ENCODE measurements at regions of chr2 and their contacts with region 1.

Region 1: DNA sequence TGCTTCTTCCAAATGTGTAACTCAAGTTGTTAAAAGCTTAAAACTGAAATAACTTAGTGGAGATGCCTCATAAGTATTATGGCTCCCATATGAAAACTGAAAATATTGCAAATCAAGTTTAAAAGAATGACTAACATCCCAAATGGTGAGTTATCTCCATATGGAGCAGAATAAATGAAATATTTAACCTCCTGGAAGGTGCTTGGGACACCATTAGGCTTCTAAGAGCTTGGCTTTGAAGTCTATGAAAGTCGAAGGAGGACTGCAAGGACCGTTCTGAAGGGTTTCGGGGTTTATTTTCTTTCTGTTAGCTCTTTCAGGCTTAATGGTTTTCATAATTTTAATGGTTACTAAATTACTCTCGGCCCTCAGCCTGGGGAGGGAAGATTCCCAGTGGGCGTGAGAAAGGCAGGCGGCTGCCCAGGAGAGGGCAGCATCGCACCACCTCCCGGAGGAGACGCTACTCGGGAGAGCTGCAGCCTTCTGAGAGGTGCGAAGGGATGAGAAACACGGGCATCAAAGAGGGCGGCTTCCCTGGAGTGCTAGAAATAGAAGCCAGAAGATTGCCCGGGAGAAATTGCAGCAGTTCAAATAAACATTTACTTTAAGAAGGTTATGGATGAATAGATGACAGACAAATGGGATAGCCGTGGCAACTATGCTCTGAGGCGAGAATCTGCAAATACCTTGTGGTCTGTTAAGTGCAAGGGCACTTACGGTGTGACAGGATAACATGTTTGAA is 43.1 kb downstream of the MAP3K19 start:
- DNase-seq: peak; percentile 57
- H3K4me3 Mint-ChIP-seq: no peak overlapping the region
- H3K27ac Mint-ChIP-seq: no peak overlapping the region
- H3K4me1 Mint-ChIP-seq: peaks cover 4% of the 10 kb centered on the region
- H3K27me3 Mint-ChIP-seq: peaks cover 28% of the 10 kb centered on the region

Region 2: GRCh38 chr2:134375935-134376334 is 628.2 kb before region 1 on chr2:
- intact Hi-C with region 1: no loop called
- DNase-seq: no peak
- H3K4me3 Mint-ChIP-seq: no peak overlapping the region
- H3K27ac Mint-ChIP-seq: no peak overlapping the region
- H3K4me1 Mint-ChIP-seq: no peaks in the 10 kb centered on the region
- H3K27me3 Mint-ChIP-seq: no peaks in the 10 kb centered on the region

Region 3: GRCh38 chr2:134973241-134974138 is 30.7 kb before region 1 on chr2:
- intact Hi-C with region 1: no loop called
- DNase-seq: no peak
- H3K4me3 Mint-ChIP-seq: no peak overlapping the region
- H3K27ac Mint-ChIP-seq: peak overlapping the region; percentile 65
- H3K4me1 Mint-ChIP-seq: peaks cover 11% of the 10 kb centered on the region
- H3K27me3 Mint-ChIP-seq: peaks cover 1% of the 10 kb centered on the region

Region 4: DNA sequence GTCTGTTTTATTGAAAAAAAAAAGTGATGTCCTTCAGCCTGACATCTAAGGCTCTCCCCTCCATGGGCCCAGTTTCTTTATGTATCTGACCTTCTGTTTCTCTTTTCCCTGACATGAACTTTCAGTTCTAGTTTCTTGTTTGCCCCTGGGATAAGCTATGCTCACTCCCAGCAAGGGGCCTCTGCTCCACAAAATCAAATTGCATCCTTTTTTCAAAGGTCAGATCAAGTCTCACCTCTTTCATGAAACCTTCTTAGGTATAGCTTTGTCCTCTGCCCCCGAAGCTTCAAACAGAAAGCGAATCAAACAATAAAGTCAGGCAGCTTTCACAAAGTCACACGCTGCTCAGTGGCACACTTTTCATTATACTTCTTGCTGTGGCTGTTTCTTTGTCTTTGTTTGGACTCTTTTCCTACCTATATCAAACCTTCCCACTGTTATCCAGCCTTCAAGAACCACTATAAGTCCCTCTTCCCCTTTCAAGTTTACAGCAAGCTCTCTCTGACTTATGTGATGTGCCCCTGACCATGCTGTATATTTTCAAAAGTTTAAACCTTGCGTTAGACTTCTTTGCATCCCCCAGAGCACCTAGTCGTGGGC is 19.8 kb after region 1 on chr2:
- intact Hi-C with region 1: no loop called
- DNase-seq: no peak
- H3K4me3 Mint-ChIP-seq: no peak overlapping the region
- H3K27ac Mint-ChIP-seq: no peak overlapping the region
- H3K4me1 Mint-ChIP-seq: peaks cover 19% of the 10 kb centered on the region
- H3K27me3 Mint-ChIP-seq: peaks cover 2% of the 10 kb centered on the region

Region 5: DNA sequence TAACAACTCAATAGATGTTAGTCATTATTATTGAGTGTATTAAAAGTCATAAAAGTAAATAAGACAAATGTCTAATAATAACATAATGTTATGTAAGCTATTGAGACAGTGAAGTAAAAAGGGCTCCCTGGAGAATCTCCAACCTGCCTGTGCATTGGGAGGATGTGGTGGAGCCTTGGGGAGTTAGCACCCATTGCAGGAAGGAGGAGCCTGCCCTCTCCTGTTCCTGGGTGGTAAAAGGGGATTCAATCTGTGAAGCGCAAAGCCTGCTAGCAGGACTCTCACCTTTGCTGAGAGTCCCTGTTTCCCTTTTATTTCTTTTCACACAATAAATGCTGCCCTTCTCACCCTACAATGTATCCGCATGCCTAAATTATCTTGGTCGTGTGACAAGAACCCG is 254.0 kb after region 1 on chr2:
- intact Hi-C with region 1: loop called (anchors 10 kb)
- DNase-seq: no peak
- H3K4me3 Mint-ChIP-seq: no peak overlapping the region
- H3K27ac Mint-ChIP-seq: no peak overlapping the region
- H3K4me1 Mint-ChIP-seq: no peaks in the 10 kb centered on the region
- H3K27me3 Mint-ChIP-seq: no peaks in the 10 kb centered on the region

Region 6: DNA sequence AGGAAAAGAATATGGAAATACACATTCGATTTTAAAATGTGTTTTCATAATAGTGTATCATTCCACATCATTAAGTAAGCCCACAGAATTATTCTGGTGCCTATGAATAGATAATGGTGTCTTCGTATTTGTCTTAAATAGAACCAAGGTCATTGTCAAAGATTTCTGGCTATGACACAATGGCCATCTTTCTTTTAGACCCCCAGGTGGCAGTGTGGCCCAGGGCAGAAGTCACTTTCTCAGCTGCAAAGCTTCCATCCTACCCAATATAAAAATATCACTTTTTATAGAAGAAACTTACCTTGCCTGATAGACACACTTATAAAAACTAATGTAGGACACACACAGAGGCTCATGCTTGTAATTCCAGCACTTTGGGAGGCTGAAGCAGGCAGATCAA is 469.4 kb after region 1 on chr2:
- intact Hi-C with region 1: loop called (anchors 10 kb)
- DNase-seq: no peak
- H3K4me3 Mint-ChIP-seq: no peak overlapping the region
- H3K27ac Mint-ChIP-seq: no peak overlapping the region
- H3K4me1 Mint-ChIP-seq: peaks cover 8% of the 10 kb centered on the region
- H3K27me3 Mint-ChIP-seq: no peaks in the 10 kb centered on the region

Region 7: GRCh38 chr2:135709992-135710391 is 705.8 kb after region 1 on chr2:
- intact Hi-C with region 1: loop called (anchors 1 kb)
- DNase-seq: peak; percentile 46
- H3K4me3 Mint-ChIP-seq: no peak overlapping the region
- H3K27ac Mint-ChIP-seq: no peak overlapping the region
- H3K4me1 Mint-ChIP-seq: peaks cover 3% of the 10 kb centered on the region
- H3K27me3 Mint-ChIP-seq: no peaks in the 10 kb centered on the region

Region 8: DNA sequence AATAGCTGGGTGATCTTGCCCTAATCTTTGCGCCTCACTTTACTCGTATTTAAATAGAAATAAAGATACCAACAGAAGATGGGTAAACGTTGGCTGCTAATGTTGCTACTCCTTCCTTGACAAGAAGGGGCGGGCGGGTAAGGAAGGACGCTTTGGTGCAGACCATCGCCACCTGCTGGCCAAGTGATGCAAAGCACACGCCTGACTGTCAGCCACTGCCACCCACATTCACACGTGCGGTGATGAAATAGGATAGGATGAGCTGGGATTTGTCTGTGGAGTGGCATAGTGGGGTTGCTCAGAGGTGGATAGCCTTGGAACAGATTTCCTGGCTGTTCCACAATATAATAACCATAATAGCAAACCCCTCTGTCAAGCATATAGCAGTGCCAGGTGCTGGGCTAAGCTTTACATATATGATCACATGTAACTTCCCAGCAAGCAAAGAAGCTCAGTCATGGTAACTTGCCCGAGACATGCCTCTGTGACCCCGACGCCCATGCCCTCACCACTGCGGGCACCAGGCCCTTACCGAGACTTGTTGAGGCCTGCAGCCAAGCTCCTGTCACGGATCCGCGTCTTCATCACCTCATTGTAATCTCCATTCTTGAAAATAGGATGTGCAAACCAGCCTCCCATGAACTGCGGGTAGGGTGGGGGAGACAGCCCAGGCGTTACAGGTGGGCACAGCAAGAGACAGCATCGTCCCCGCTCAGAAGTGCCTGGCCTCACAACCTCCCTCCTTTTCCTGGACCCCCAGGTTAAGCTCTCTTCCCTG is 793.5 kb after region 1 on chr2:
- intact Hi-C with region 1: loop called (anchors 5 kb)
- DNase-seq: peak; percentile 67
- H3K4me3 Mint-ChIP-seq: no peak overlapping the region
- H3K27ac Mint-ChIP-seq: no peak overlapping the region
- H3K4me1 Mint-ChIP-seq: peaks cover 21% of the 10 kb centered on the region
- H3K27me3 Mint-ChIP-seq: no peaks in the 10 kb centered on the region